ENCODE measurements at regions of chr3 and their contacts with region 1.

Region 1: GRCh38 chr3:190883973-190884832 is 21.7 kb upstream of the GMNC start:
- DNase-seq: peak in 1 of 2 donors; percentile 31
- H3K4me3 ChIP-seq: no peak overlapping the region
- H3K27ac ChIP-seq: no peak overlapping the region
- H3K4me1 ChIP-seq: no peaks in the 10 kb centered on the region
- H3K27me3 ChIP-seq: no peaks in the 10 kb centered on the region
- CTCF ChIP-seq: peak; percentile 69 to 86

Region 2: DNA sequence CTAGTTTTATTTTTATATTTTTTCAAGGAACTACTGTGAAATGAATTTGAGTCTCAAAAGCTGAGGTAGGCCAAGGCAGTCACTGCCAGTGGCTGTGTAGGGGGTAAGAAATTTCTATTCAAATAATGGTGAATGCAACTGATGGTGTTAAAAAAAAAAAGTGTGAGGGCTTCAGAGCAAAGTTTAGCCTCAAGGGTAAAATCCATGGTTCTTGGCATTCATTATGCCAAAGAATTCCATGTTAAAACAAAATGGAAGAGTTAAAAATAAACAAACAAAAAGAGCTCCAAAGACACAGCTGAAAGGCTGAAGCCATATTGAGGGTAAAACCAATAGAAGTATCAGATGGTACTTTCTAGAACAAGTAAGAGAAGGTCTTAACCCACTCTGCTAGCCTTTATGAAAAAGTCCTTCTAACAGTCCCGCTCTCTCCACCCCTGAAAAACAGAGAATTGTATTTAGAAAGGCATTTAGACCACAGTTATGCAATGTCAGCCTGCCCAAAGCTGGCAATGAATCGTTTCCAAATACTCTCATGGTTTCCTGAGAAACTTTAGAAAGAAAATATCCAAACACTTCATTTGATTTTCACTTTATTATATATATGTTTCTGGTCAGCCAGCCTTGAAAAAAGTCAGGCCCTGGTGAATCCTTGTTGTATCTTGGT is 136.7 kb after region 1 on chr3:
- intact Hi-C with region 1: loop called (anchors 10 kb)
- DNase-seq: no peak
- H3K4me3 ChIP-seq: no peak overlapping the region
- H3K27ac ChIP-seq: no peak overlapping the region
- H3K4me1 ChIP-seq: peaks cover 0 to 6% (median 2%) of the 10 kb centered on the region in 4 donors
- H3K27me3 ChIP-seq: no peaks in the 10 kb centered on the region
- CTCF ChIP-seq: no peak

Measured in tibial artery (tissue), 4 donors.